Kidney (tissue), 22 donors: ENCODE measurements at regions of chr6 and their contacts with region 1.

Region 1: GRCh38 chr6:159729598-159730331 is 2.5 kb downstream of the WTAP start:
- DNase-seq: peak in 2 of 5 donors; percentile 34 to 37
- H3K4me3 ChIP-seq: peak overlapping the region; percentile 12 to 96 (median 67)
- H3K27ac ChIP-seq: peak overlapping the region in 1 of 2 donors; percentile 41
- H3K4me1 ChIP-seq: peaks cover 0 to 25% (median 10%) of the 10 kb centered on the region in 3 donors
- H3K27me3 ChIP-seq: no peaks in the 10 kb centered on the region
- CTCF ChIP-seq: no peak

Region 2: GRCh38 chr6:159679091-159680077 is 50.4 kb before region 1 on chr6:
- intact Hi-C with region 1: loop called (anchors 10 kb)
- DNase-seq: no peak
- H3K4me3 ChIP-seq: no peak overlapping the region
- H3K27ac ChIP-seq: no peak overlapping the region
- H3K4me1 ChIP-seq: no peaks in the 10 kb centered on the region
- H3K27me3 ChIP-seq: no peaks in the 10 kb centered on the region
- CTCF ChIP-seq: no peak

Region 3: GRCh38 chr6:159852877-159853276 is 123.1 kb after region 1 on chr6:
- intact Hi-C with region 1: no loop called
- DNase-seq: peak in 2 of 5 donors; percentile 11 to 26
- H3K4me3 ChIP-seq: no peak overlapping the region
- H3K27ac ChIP-seq: no peak overlapping the region
- H3K4me1 ChIP-seq: no peaks in the 10 kb centered on the region
- H3K27me3 ChIP-seq: no peaks in the 10 kb centered on the region
- CTCF ChIP-seq: no peak

Region 4: GRCh38 chr6:160160450-160160849 is 430.7 kb after region 1 on chr6:
- intact Hi-C with region 1: no loop called
- DNase-seq: peak in 1 of 5 donors; percentile 47
- H3K4me3 ChIP-seq: no peak overlapping the region
- H3K27ac ChIP-seq: no peak overlapping the region
- H3K4me1 ChIP-seq: no peaks in the 10 kb centered on the region
- H3K27me3 ChIP-seq: no peaks in the 10 kb centered on the region
- CTCF ChIP-seq: no peak